Mammary epithelial cell (primary cell): ENCODE measurements at regions of chr12 and their contacts with region 1.

Region 1: DNA sequence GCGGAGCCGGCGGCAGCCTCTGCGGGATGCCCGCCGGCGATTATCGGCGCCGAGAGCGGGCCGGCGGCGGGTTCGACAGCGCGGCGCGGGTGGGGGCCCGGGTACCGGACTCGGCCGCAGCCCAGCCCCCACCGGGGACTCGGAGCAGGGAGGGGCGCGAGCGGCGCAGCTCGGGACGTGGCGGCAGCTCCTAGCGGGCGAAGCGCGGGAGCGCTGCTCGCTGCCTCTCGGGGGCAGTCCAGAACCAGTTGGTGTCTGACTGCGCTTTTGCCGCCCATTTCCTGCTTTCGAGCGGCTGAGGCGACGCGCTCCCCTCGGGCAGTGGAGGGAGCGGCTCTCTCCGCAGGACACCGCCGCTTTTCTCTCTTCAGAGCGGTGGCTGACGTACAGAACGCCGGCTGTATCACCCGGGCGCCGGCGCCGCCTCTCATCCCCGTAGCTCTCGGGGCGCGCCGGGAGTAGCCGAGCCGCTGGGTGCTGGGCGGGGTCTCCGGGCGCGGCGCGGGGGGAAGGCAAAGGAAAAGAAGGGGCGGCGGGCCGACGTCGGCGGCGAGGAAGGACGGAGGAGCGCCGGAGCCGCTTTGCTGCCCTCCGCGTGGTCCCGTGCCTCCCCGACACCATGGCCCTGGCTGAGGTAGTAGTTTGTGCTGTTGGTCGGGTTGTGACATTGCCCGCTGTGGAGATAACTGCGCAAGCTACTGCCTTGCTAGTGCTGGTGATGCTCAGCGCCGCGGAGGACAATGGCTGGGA is 136.6 kb downstream of the MON2 start:
- DNase-seq: peak; percentile 87
- H3K4me3 ChIP-seq: peak overlapping the region; percentile 69 to 90 (median 89)
- H3K27ac ChIP-seq: peak overlapping the region; percentile 98
- H3K4me1 ChIP-seq: peaks cover 15% of the 10 kb centered on the region
- H3K27me3 ChIP-seq: no peaks in the 10 kb centered on the region
- CTCF ChIP-seq: peak; percentile 27 to 66

Region 2: GRCh38 chr12:62581288-62582064 is 21.8 kb before region 1 on chr12:
- CTCF ChIA-PET with region 1: interaction called, 5 read pairs
- dilution Hi-C with region 1: no loop called
- in situ Hi-C with region 1: no loop called
- intact Hi-C with region 1: loop called (anchors 2 kb)
- DNase-seq: peak; percentile 25
- H3K4me3 ChIP-seq: no peak overlapping the region
- H3K27ac ChIP-seq: no peak overlapping the region
- H3K4me1 ChIP-seq: no peaks in the 10 kb centered on the region
- H3K27me3 ChIP-seq: no peaks in the 10 kb centered on the region
- CTCF ChIP-seq: peak; percentile 46 to 65

Region 3: DNA sequence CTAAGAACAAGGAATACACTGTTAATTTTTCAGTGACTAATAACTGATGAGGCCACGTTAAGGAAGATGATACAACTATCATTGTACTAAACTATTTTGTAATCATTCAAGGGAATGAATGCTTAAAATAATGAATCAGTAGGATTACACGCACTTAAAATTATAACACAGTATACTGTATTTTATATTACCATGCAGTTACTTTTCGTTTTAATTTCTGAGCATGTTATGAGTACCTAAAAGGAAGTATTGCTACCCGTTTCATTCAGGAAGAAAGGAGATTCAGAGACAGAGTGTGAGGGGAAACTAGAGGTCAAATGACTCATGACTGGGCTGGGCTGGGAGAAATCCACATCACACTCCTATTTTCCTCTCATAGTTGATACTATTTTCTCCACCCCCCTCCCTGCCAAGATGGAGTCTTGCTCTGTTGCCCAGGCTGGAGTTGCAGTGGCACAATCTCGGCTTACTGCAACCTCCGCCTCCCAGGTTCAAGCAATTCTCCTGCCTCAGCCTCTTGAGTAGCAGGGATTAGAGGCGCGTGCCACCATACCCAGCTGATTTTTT is 129.7 kb after region 1 on chr12:
- CTCF ChIA-PET with region 1: no interaction called
- dilution Hi-C with region 1: no loop called
- in situ Hi-C with region 1: loop called in 1 of 2 experiments (anchors 10 kb)
- intact Hi-C with region 1: loop called (anchors 2 kb)
- DNase-seq: peak; percentile 80
- H3K4me3 ChIP-seq: no peak overlapping the region
- H3K27ac ChIP-seq: peak overlapping the region; percentile 98
- H3K4me1 ChIP-seq: peaks cover 46% of the 10 kb centered on the region
- H3K27me3 ChIP-seq: no peaks in the 10 kb centered on the region
- CTCF ChIP-seq: no peak

Region 4: GRCh38 chr12:62793256-62794217 is 190.3 kb after region 1 on chr12:
- CTCF ChIA-PET with region 1: interaction called, 3 read pairs
- dilution Hi-C with region 1: loop called (anchors 10 kb)
- in situ Hi-C with region 1: loop called in 1 of 2 experiments (anchors 5 kb)
- intact Hi-C with region 1: loop called (anchors 1 kb)
- DNase-seq: peak; percentile 67
- H3K4me3 ChIP-seq: no peak overlapping the region
- H3K27ac ChIP-seq: no peak overlapping the region
- H3K4me1 ChIP-seq: peaks cover 5% of the 10 kb centered on the region
- H3K27me3 ChIP-seq: no peaks in the 10 kb centered on the region
- CTCF ChIP-seq: peak; percentile 95 to 96